A673 (cell line): ENCODE measurements at regions of chr14 and their contacts with region 1.

Region 1: GRCh38 chr14:98227000-98227726 is 1044.8 kb downstream of the BCL11B start:
- DNase-seq: no peak
- H3K4me3 ChIP-seq: no peak overlapping the region
- H3K27ac ChIP-seq: no peak overlapping the region
- H3K4me1 ChIP-seq: no peaks in the 10 kb centered on the region
- H3K27me3 ChIP-seq: no peaks in the 10 kb centered on the region
- CTCF ChIP-seq: no peak

Region 2: GRCh38 chr14:98370352-98370751 is 143.2 kb after region 1 on chr14:
- CTCF ChIA-PET with region 1: no interaction called
- POLR2A ChIA-PET with region 1: no interaction called
- intact Hi-C with region 1: no loop called
- DNase-seq: no peak
- H3K4me3 ChIP-seq: no peak overlapping the region
- H3K27ac ChIP-seq: no peak overlapping the region
- H3K4me1 ChIP-seq: no peaks in the 10 kb centered on the region
- H3K27me3 ChIP-seq: no peaks in the 10 kb centered on the region
- CTCF ChIP-seq: no peak

Region 3: GRCh38 chr14:98599082-98599481 is 371.9 kb after region 1 on chr14:
- CTCF ChIA-PET with region 1: no interaction called
- POLR2A ChIA-PET with region 1: no interaction called
- intact Hi-C with region 1: loop called (anchors 5 kb)
- DNase-seq: peak; percentile 5
- H3K4me3 ChIP-seq: no peak overlapping the region
- H3K27ac ChIP-seq: no peak overlapping the region
- H3K4me1 ChIP-seq: no peaks in the 10 kb centered on the region
- H3K27me3 ChIP-seq: no peaks in the 10 kb centered on the region
- CTCF ChIP-seq: no peak